Naive thymus-derived CD4-positive, alpha-beta T cell (primary cell): ENCODE measurements at regions of chr13 and their contacts with region 1.

Region 1: DNA sequence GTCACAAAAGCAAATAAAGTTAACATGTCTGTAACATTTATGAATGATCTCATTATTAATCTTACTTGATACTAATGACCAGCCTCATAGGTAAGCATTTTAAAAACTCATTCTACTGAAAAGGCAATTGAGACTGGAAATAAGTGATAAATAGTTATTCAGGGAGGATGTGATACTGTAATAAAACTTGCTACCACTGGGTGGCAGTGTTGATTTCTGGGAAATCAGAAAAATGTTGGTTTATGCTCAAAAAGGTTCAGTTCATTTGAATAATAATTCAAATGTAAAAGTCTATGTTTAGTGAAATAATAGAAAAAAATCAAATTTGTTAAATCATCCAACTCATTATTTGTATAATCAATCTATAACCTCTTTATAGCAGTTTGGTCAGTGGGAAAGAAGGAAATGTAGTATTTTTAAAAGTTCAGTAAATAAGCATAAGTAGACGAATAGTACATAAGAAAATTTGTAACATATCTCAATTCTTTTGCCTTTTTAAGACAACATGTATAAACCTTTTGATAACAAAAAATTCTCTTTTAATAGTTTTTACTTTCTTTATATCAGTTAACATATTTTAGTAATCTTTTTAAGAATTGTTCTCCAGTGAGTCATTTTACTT is 9.6 kb downstream of the ABHD13 start:
- DNase-seq: peak in 6 of 9 donors; percentile 30 to 58 (median 46)
- ATAC-seq: peak; percentile 64
- H3K4me3 ChIP-seq: no peak overlapping the region
- H3K4me3 Mint-ChIP-seq: no peak overlapping the region
- H3K27ac ChIP-seq: no peak overlapping the region
- H3K27ac Mint-ChIP-seq: peak overlapping the region in 1 of 9 donors; percentile 51
- H3K4me1 ChIP-seq: peaks cover 14 to 18% of the 10 kb centered on the region in 2 donors
- H3K4me1 Mint-ChIP-seq: peaks cover 31 to 76% (median 71%) of the 10 kb centered on the region in 7 donors
- H3K27me3 ChIP-seq: no peaks in the 10 kb centered on the region
- H3K27me3 Mint-ChIP-seq: no peaks in the 10 kb centered on the region

Region 2: DNA sequence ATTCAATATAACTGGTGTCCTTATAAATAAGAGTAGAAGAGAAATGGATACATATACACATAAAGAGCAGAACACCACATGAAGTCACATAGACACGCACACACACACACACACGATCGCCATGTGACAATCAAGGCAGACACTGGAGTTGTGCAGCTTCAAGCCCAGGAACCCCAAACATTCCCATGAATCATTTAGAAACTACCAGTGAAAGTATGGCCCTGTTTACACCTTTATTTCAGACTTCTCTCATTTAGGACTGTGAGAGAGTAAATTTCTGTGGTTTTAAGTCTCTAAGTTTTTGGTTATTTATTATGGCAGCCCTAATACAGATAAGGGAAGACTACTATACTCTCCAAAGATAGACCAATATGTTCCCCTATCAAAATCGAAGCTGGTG is 21.4 kb after region 1 on chr13:
- CTCF ChIA-PET with region 1: interaction called, 3 read pairs
- POLR2A ChIA-PET with region 1: no interaction called
- intact Hi-C with region 1: loop called in 1 of 2 experiments (anchors 2 kb)
- DNase-seq: no peak
- ATAC-seq: no peak
- H3K4me3 ChIP-seq: no peak overlapping the region
- H3K4me3 Mint-ChIP-seq: no peak overlapping the region
- H3K27ac ChIP-seq: no peak overlapping the region
- H3K27ac Mint-ChIP-seq: no peak overlapping the region
- H3K4me1 ChIP-seq: no peaks in the 10 kb centered on the region
- H3K4me1 Mint-ChIP-seq: peaks cover 0 to 5% (median 0%) of the 10 kb centered on the region in 7 donors
- H3K27me3 ChIP-seq: no peaks in the 10 kb centered on the region
- H3K27me3 Mint-ChIP-seq: no peaks in the 10 kb centered on the region

Region 3: DNA sequence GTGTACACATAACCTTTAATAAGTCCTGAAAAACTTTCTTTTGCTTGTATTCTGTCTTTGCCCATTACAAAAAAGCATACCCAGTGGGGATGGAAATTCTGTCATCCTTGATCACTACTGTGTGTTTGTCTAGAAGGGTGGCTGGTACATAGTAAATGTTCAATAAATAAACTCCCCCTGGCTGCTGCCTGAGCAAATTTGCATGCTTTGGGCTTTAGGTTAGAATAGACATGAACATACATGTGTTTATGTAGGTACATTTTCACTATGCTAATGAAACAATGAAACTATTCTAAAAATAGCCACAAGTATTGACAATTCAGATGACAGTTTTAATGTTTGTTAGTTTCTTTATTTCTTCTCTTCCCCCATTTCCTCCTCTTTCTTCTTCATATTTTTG is 77.9 kb after region 1 on chr13:
- CTCF ChIA-PET with region 1: no interaction called
- POLR2A ChIA-PET with region 1: no interaction called
- intact Hi-C with region 1: loop called (anchors 2 to 5 kb)
- DNase-seq: no peak
- ATAC-seq: no peak
- H3K4me3 ChIP-seq: no peak overlapping the region
- H3K4me3 Mint-ChIP-seq: peak overlapping the region in 1 of 10 donors; percentile 61
- H3K27ac ChIP-seq: no peak overlapping the region
- H3K27ac Mint-ChIP-seq: peak overlapping the region in 2 of 9 donors; percentile 37 to 39
- H3K4me1 ChIP-seq: peaks cover 0 to 8% of the 10 kb centered on the region in 2 donors
- H3K4me1 Mint-ChIP-seq: peaks cover 0 to 25% (median 14%) of the 10 kb centered on the region in 7 donors
- H3K27me3 ChIP-seq: no peaks in the 10 kb centered on the region
- H3K27me3 Mint-ChIP-seq: no peaks in the 10 kb centered on the region

Region 4: GRCh38 chr13:108407495-108407894 is 179.7 kb after region 1 on chr13:
- CTCF ChIA-PET with region 1: no interaction called
- POLR2A ChIA-PET with region 1: no interaction called
- intact Hi-C with region 1: loop called in 1 of 2 experiments (anchors 5 kb)
- DNase-seq: no peak
- ATAC-seq: no peak
- H3K4me3 ChIP-seq: no peak overlapping the region
- H3K4me3 Mint-ChIP-seq: peak overlapping the region in 2 of 10 donors; percentile 84 to 87
- H3K27ac ChIP-seq: peak overlapping the region; percentile 1
- H3K27ac Mint-ChIP-seq: peak overlapping the region in 8 of 9 donors; percentile 64 to 95 (median 82)
- H3K4me1 ChIP-seq: peaks cover 35% of the 10 kb centered on the region in 2 donors
- H3K4me1 Mint-ChIP-seq: peaks cover 13 to 70% (median 55%) of the 10 kb centered on the region in 7 donors
- H3K27me3 ChIP-seq: no peaks in the 10 kb centered on the region
- H3K27me3 Mint-ChIP-seq: peaks cover 0 to 2% (median 0%) of the 10 kb centered on the region in 5 donors

Region 5: DNA sequence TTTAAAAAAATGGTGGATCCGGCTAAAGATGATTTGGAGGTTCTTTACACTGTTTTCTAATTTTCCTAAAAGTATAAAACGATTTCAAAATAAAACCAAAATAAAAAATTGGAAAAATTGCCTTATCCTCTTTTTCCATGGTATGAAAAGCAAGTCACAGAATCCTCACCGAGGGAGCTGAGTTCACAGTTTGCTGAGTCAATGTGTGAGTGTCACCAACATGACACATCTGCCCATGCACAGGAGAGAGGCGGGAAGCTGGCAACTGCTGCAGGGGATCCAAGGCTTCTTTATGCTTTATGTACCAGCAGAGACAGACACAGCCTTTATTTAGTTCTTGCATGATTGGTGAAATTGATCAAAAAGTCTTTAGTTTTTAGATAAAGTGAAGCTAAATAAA is 199.6 kb after region 1 on chr13:
- CTCF ChIA-PET with region 1: no interaction called
- POLR2A ChIA-PET with region 1: no interaction called
- intact Hi-C with region 1: no loop called
- DNase-seq: no peak
- ATAC-seq: no peak
- H3K4me3 ChIP-seq: no peak overlapping the region
- H3K4me3 Mint-ChIP-seq: no peak overlapping the region
- H3K27ac ChIP-seq: no peak overlapping the region
- H3K27ac Mint-ChIP-seq: no peak overlapping the region
- H3K4me1 ChIP-seq: no peaks in the 10 kb centered on the region
- H3K4me1 Mint-ChIP-seq: peaks cover 0 to 6% (median 0%) of the 10 kb centered on the region in 7 donors
- H3K27me3 ChIP-seq: no peaks in the 10 kb centered on the region
- H3K27me3 Mint-ChIP-seq: no peaks in the 10 kb centered on the region

Region 6: GRCh38 chr13:108895220-108895704 is 667.5 kb after region 1 on chr13:
- CTCF ChIA-PET with region 1: interaction called, 7 read pairs
- POLR2A ChIA-PET with region 1: no interaction called
- intact Hi-C with region 1: loop called (anchors 1 to 2 kb)
- DNase-seq: peak in 5 of 9 donors; percentile 10 to 25 (median 21)
- ATAC-seq: no peak
- H3K4me3 ChIP-seq: no peak overlapping the region
- H3K4me3 Mint-ChIP-seq: no peak overlapping the region
- H3K27ac ChIP-seq: no peak overlapping the region
- H3K27ac Mint-ChIP-seq: no peak overlapping the region
- H3K4me1 ChIP-seq: peaks cover 0 to 5% of the 10 kb centered on the region in 2 donors
- H3K4me1 Mint-ChIP-seq: peaks cover 0 to 16% (median 6%) of the 10 kb centered on the region in 7 donors
- H3K27me3 ChIP-seq: no peaks in the 10 kb centered on the region
- H3K27me3 Mint-ChIP-seq: peaks cover 5 to 24% (median 7%) of the 10 kb centered on the region in 5 donors